ENCODE measurements at regions of chr11 and their contacts with region 1.

Region 1: GRCh38 chr11:110086892-110087309 is 6.3 kb upstream of the ZC3H12C start:
- DNase-seq: no peak
- CTCF ChIP-seq: no peak

Region 2: DNA sequence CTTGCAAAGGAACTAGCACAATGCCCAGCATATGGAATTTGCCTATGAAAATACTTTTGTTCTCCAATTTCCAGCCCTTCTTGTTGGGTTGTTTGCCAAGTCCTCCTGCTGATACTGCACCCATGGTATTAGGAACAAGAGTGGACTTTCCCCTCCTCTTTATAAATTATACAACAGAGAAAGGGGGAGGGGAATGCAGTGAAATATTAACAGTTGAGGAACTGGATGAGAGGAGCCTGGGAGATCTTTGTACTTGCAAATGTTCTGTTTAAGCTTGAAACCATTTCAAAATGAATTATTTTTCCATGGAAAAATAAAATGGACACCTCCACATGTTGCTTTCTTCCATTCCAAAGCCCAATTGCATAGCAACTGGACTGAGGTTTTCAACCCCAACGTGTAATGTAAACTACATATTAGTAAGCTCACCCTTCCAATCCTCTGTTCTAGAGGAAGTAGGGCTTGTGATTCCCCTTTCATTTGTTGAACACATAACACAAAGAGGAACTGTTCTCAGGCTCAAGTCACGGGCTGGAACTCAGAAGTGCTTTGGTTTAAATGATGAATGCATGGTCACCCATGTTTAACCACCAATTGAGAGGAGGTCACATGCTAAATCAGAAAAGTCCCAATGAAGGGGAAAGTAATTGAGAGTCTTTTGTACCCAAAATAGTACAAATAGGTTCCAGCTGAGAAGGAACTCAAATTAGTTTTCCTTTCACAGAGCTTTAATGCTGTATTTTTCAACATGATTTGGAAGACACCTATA is 59.9 kb before region 1 on chr11:
- in situ Hi-C with region 1: loop called (anchors 5 kb)
- DNase-seq: peak; percentile 63
- CTCF ChIP-seq: no peak

Region 3: GRCh38 chr11:110272919-110273318 is 186.0 kb after region 1 on chr11:
- in situ Hi-C with region 1: no loop called
- DNase-seq: no peak
- CTCF ChIP-seq: no peak